ENCODE measurements at regions of chr20 and their contacts with region 1.

Region 1: DNA sequence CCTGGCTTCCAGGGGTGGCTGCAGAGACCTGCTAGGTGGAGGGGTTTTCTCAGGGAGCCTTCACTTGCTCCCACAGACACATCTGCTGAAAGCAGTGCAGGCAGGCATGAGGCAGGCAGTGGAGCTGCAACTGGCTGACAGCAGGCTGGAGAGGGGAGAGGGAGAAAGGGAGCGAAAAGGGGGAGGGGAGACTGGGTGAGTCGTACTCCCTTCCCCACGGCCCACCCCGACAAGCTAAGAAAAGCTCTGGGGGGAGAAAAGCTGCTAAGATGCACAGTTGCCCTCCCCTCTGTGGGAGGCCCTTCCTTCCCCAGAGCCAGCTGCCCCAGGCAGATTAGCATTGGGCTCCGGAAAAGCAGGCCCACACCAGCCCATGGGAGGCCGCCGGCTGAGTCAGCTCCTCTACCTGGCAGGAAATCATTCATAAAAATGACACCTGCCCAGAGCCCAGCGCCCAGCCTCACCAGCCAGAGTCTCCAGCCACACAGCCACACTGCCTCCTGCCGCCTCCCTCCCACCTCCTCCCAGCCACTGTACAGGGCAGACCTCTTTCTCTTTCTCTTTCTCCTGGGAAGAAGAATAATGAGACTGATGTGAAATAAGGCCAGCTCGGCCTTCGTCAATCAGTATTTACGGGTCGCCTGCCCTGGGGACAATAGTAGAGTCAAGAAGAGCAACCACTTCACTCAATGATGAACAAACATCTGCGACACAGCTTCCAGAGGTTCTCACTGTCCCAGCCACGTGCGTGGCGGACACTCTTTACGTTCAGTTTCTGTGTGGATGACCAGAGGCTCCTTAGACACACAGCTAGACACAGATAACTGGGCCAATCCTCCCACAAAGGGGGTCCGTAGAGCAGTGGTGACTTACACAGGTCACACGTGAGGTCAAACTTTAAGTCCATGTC is 7.7 kb upstream of the C20orf203 start:
- DNase-seq: no peak
- ATAC-seq: peak; percentile 47
- H3K4me3 ChIP-seq: peak overlapping the region; percentile 23 to 71 (median 48)
- H3K27ac ChIP-seq: peak overlapping the region; percentile 35
- H3K4me1 ChIP-seq: peaks cover 89% of the 10 kb centered on the region
- H3K27me3 ChIP-seq: no peaks in the 10 kb centered on the region
- CTCF ChIP-seq: peak; percentile 25; the same call in 1 of the 2 replicates
- EP300 ChIP-seq: 0 out of 4 replicates have a peak, but pooled peaks of 1 of the 2 experiments have one; percentile 10
- POLR2A ChIP-seq: peak in 1 of 2 experiments; percentile 37; a peak in 1 of 4 replicates
- RAD21 ChIP-seq: no peak

Region 2: DNA sequence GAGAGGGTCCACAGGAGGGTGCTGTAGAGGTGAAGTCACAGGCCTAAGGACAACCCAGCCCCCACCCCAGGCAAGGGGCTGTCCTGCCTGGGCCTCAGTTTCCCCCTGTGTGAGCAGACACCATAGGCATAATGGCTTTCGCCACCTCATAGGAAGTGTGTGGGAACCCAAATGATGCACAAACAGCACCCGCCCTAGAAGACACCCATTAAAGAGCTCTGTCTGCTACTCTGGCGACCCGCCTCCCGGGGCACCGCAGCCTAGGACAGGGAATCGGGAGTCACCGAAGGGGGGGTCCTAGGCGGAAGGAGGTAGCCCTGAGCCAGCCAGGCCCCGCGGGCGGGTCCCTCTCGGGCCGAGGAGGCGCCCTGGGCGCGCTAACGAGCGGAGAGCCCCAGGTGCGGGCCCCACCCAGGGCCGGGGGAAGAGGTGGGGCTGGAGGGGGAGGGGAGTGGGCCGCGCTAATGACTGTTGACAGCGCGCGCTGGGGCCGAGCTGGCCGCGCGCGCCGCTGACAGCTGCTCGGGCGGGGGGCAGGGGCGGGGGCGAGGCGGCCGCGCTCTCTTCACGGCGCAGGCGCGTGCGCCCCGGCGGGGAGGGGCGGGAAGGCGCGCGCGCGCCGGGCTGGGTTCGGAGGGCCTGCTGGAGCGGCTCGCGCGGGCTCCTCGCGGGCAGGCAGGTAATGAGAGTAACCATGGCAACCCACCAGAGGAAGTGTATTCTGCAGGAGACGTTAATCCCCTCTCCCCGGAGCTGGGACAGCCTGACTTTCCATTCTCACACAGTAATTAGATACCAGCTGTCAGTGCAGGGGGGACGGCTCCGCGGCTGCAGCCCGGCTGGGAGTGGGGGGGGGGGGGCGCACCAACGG is 145.2 kb before region 1 on chr20:
- CTCF ChIA-PET with region 1: no interaction called
- POLR2A ChIA-PET with region 1: interaction called, 10 read pairs
- in situ Hi-C with region 1: no loop called
- intact Hi-C with region 1: no loop called
- DNase-seq: peak; percentile 79
- ATAC-seq: peak; percentile 47
- H3K4me3 ChIP-seq: peak overlapping the region; percentile 52 to 70 (median 64); a peak in 5 of 6 replicates
- H3K27ac ChIP-seq: peak overlapping the region; percentile 44
- H3K4me1 ChIP-seq: peaks cover 79% of the 10 kb centered on the region
- H3K27me3 ChIP-seq: no peaks in the 10 kb centered on the region
- CTCF ChIP-seq: no peak; the same call in 1 of the 2 replicates
- EP300 ChIP-seq: no peak
- POLR2A ChIP-seq: no peak
- RAD21 ChIP-seq: no peak; the same call in 1 of the 2 replicates

Region 3: DNA sequence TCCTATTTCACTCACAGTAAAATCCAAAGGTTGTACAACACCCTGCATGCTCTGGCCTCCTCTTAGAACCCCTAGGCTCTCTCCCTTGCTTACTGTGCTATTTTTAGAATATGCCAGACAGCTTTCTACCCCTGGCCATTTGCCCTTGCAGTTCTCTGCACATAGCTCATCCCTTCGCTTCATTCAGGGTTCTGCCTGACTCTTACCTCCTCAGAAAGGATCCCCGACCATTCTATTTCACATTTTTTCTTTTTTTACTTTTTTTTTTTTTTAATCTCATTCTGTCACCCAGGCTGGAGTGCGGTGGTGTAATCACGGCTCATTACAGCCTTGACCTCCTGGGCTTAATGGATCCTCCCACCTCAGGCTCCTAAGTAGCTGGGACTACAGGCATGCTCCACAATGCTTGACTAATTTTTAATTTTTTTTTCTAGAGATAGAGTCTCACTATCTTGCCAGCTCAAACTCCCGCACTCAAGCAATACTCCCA is 28.2 kb after region 1 on chr20:
- CTCF ChIA-PET with region 1: no interaction called
- POLR2A ChIA-PET with region 1: interaction called, 17 read pairs
- in situ Hi-C with region 1: no loop called
- intact Hi-C with region 1: loop called (anchors 1 kb)
- DNase-seq: peak; percentile 64
- ATAC-seq: peak; percentile 89
- H3K4me3 ChIP-seq: peak overlapping the region in 2 of 3 experiments; percentile 8 to 42; a peak in 3 of 6 replicates
- H3K27ac ChIP-seq: peak overlapping the region; percentile 84
- H3K4me1 ChIP-seq: peaks cover 27% of the 10 kb centered on the region
- H3K27me3 ChIP-seq: no peaks in the 10 kb centered on the region
- CTCF ChIP-seq: no peak
- EP300 ChIP-seq: 0 out of 4 replicates have a peak, but pooled peaks of 1 of the 2 experiments have one; percentile 5
- POLR2A ChIP-seq: no peak
- RAD21 ChIP-seq: no peak

Region 4: GRCh38 chr20:32743237-32744112 is 62.0 kb after region 1 on chr20 and contains the start of gene COMMD7:
- CTCF ChIA-PET with region 1: no interaction called
- POLR2A ChIA-PET with region 1: interaction called, 11 read pairs
- in situ Hi-C with region 1: no loop called
- intact Hi-C with region 1: no loop called
- DNase-seq: peak; percentile 50
- ATAC-seq: peak; percentile 88
- H3K4me3 ChIP-seq: peak within 1 kb of the TSS; percentile 80 to 99 (median 94)
- H3K27ac ChIP-seq: peak within 1 kb of the TSS; percentile 44
- H3K4me1 ChIP-seq: peaks cover 54% of the 10 kb centered on the region
- H3K27me3 ChIP-seq: no peaks in the 10 kb centered on the region; a peak in 1 of 5 replicates
- CTCF ChIP-seq: no peak
- EP300 ChIP-seq: no peak
- POLR2A ChIP-seq: peak; percentile 3 to 44; a peak in 2 of 4 replicates
- RAD21 ChIP-seq: peak; percentile 79
- total RNA-seq, gene COMMD7: 42.1 and 50.7 TPM in 2 replicates

Region 5: DNA sequence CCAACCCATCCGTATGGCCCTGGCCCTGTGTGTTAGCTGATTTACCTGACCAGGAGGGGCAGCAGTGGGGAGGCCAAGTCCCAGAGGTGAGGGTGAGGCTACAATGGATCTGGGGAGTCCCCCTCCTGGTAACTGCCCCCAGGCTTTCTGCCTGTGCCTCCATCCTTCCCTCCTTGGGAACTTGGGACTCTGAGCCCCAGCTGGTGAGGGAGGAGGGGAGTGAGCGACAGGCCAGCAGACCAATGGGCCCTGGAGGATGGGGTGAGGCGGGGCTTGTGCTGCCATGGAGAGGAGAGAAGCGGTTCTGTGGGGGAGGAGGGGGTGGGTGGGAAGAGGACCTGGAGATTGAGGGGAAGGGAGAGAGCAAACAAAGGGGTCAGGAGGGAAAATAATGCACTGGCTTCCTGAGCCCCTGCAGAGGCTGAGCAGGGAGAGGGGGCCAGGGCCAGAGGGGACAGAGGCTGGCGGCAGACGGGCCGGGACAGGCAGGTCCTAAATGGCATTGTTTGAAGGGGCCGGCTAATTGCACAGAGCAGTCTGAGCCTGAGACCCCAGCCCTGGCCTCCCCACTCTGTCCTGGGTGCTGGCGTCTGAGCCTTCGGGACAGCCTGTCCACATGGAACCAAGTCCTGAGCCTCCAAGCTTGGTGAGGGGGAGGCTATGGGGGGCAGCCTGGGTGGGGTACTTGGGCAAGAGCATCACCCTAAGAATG is 98.2 kb after region 1 on chr20:
- CTCF ChIA-PET with region 1: interaction called, 203 read pairs
- POLR2A ChIA-PET with region 1: interaction called, 54 read pairs
- in situ Hi-C with region 1: no loop called
- intact Hi-C with region 1: no loop called
- DNase-seq: no peak
- ATAC-seq: peak; percentile 7; the same call in 1 of the 3 replicates
- H3K4me3 ChIP-seq: no peak overlapping the region
- H3K27ac ChIP-seq: no peak overlapping the region
- H3K4me1 ChIP-seq: peaks cover 35% of the 10 kb centered on the region
- H3K27me3 ChIP-seq: no peaks in the 10 kb centered on the region
- CTCF ChIP-seq: no peak; the same call in 1 of the 2 replicates
- EP300 ChIP-seq: no peak
- POLR2A ChIP-seq: no peak
- RAD21 ChIP-seq: no peak

Measured in HepG2 (cell line).